ENCODE measurements at regions of chr1 and their contacts with region 1.

Region 1: GRCh38 chr1:157992031-157992832 is 1.2 kb upstream of the KIRREL1 start:
- DNase-seq: peak; percentile 75 to 89 (median 85)
- H3K4me3 ChIP-seq: no peak overlapping the region
- H3K27ac ChIP-seq: peak overlapping the region; percentile 25 to 97
- H3K4me1 ChIP-seq: peaks cover 13% of the 10 kb centered on the region
- H3K27me3 ChIP-seq: no peaks in the 10 kb centered on the region
- CTCF ChIP-seq: peak; percentile 92 to 95 (median 92)
- EP300 ChIP-seq: no peak
- POLR2A ChIP-seq: no peak

Region 2: GRCh38 chr1:158035976-158036583 is 43.8 kb after region 1 on chr1:
- intact Hi-C with region 1: loop called (anchors 2 to 5 kb)
- DNase-seq: peak; percentile 49 to 77 (median 69)
- H3K4me3 ChIP-seq: no peak overlapping the region
- H3K27ac ChIP-seq: no peak overlapping the region
- H3K4me1 ChIP-seq: peaks cover 22% of the 10 kb centered on the region
- H3K27me3 ChIP-seq: no peaks in the 10 kb centered on the region
- CTCF ChIP-seq: peak; percentile 81 to 90 (median 88)
- EP300 ChIP-seq: no peak
- POLR2A ChIP-seq: no peak

Region 3: GRCh38 chr1:158087320-158087927 is 95.2 kb after region 1 on chr1:
- intact Hi-C with region 1: loop called in 3 of 4 experiments (anchors 5 to 10 kb)
- DNase-seq: peak; percentile 47 to 71 (median 61)
- H3K4me3 ChIP-seq: no peak overlapping the region
- H3K27ac ChIP-seq: no peak overlapping the region
- H3K4me1 ChIP-seq: no peaks in the 10 kb centered on the region
- H3K27me3 ChIP-seq: no peaks in the 10 kb centered on the region
- CTCF ChIP-seq: peak; percentile 61 to 72 (median 68)
- EP300 ChIP-seq: no peak
- POLR2A ChIP-seq: no peak

Region 4: DNA sequence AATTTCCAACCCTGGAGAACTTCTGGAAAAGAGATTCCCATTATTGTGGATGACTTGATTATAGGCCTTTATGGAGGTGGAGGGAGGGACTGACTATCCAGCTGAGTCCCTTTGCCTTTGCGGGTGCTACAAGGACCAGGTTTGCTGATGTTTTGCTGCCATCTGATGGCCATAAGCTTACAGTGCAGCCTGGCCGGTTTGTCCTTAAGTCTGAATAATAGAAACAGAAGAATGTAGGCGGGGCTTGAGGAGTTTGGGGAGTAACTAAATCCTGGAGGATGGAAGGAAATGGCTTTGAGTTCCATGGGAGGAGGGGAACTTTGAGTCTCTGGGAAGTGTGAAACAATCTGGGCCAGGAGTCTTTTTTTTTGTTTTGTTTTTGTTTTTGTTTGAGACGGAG is 132.8 kb after region 1 on chr1:
- intact Hi-C with region 1: loop called in 1 of 4 experiments (anchors 5 kb)
- DNase-seq: peak; percentile 76 to 93 (median 87)
- H3K4me3 ChIP-seq: no peak overlapping the region
- H3K27ac ChIP-seq: no peak overlapping the region
- H3K4me1 ChIP-seq: no peaks in the 10 kb centered on the region
- H3K27me3 ChIP-seq: no peaks in the 10 kb centered on the region
- CTCF ChIP-seq: peak; percentile 64 to 94 (median 91)
- EP300 ChIP-seq: no peak
- POLR2A ChIP-seq: no peak

Region 5: GRCh38 chr1:159854693-159855192 is 1862.5 kb after region 1 on chr1:
- intact Hi-C with region 1: loop called in 1 of 4 experiments (anchors 10 kb)
- DNase-seq: peak; percentile 89 to 94 (median 91)
- H3K4me3 ChIP-seq: peak overlapping the region; percentile 73
- H3K27ac ChIP-seq: peak overlapping the region; percentile 90 to 98
- H3K4me1 ChIP-seq: peaks cover 3% of the 10 kb centered on the region
- H3K27me3 ChIP-seq: no peaks in the 10 kb centered on the region
- CTCF ChIP-seq: peak in 2 of 3 donors; percentile 11 to 49
- EP300 ChIP-seq: no peak
- POLR2A ChIP-seq: peak; percentile 82